H1 (cell line): ENCODE measurements at regions of chr9 and their contacts with region 1.

Region 1: GRCh38 chr9:109469646-109470358 is 28.3 kb downstream of the PTPN3 start:
- DNase-seq: peak; percentile 44 to 76
- H3K4me3 ChIP-seq: no peak overlapping the region
- H3K27ac ChIP-seq: no peak overlapping the region
- H3K4me1 ChIP-seq: no peaks in the 10 kb centered on the region
- H3K27me3 ChIP-seq: no peaks in the 10 kb centered on the region
- CTCF ChIP-seq: peak; percentile 84 to 95 (median 93)
- EP300 ChIP-seq: no peak
- POLR2A ChIP-seq: no peak
- RAD21 ChIP-seq: peak; percentile 89 to 90

Region 2: DNA sequence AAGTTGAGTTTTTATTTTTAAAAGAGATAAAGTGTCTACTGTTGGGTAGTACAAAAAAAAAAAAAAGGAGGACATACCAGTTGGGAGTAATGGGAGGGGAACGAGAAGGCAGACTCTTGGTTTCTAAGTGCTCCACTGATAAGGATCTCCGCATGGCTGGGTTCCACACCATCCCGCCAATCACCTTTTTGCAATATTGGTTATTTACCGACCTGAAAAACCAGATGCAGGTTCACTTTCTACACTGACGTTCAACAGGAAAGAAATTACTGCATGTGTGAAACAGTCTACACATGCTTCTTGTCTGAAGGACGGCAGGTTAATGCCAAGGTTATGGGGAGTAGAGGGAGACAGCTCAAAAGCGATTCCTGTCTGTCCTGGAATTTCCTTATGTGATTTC is 47.2 kb before region 1 on chr9:
- CTCF ChIA-PET with region 1: interaction called, 19 read pairs
- POLR2A ChIA-PET with region 1: no interaction called
- DNase-seq: no peak
- H3K4me3 ChIP-seq: no peak overlapping the region
- H3K27ac ChIP-seq: no peak overlapping the region
- H3K4me1 ChIP-seq: peaks cover 0 to 5% (median 0%) of the 10 kb centered on the region in 4 experiments; a peak in 1 of 7 replicates
- H3K27me3 ChIP-seq: no peaks in the 10 kb centered on the region
- CTCF ChIP-seq: no peak
- EP300 ChIP-seq: no peak
- POLR2A ChIP-seq: no peak
- RAD21 ChIP-seq: no peak

Region 3: GRCh38 chr9:109440797-109441287 is 29.0 kb before region 1 on chr9:
- CTCF ChIA-PET with region 1: interaction called, 66 read pairs
- POLR2A ChIA-PET with region 1: no interaction called
- DNase-seq: peak in 1 of 2 experiments; percentile 63
- H3K4me3 ChIP-seq: no peak overlapping the region
- H3K27ac ChIP-seq: no peak overlapping the region
- H3K4me1 ChIP-seq: peaks cover 0 to 6% (median 0%) of the 10 kb centered on the region in 4 experiments; a peak in 1 of 7 replicates
- H3K27me3 ChIP-seq: no peaks in the 10 kb centered on the region
- CTCF ChIP-seq: peak in 2 of 3 experiments; percentile 75 to 88; a peak in 3 of 4 replicates
- EP300 ChIP-seq: no peak
- POLR2A ChIP-seq: peak; percentile 45 to 60; a peak in 2 of 3 replicates
- RAD21 ChIP-seq: peak; percentile 58 to 66

Region 4: DNA sequence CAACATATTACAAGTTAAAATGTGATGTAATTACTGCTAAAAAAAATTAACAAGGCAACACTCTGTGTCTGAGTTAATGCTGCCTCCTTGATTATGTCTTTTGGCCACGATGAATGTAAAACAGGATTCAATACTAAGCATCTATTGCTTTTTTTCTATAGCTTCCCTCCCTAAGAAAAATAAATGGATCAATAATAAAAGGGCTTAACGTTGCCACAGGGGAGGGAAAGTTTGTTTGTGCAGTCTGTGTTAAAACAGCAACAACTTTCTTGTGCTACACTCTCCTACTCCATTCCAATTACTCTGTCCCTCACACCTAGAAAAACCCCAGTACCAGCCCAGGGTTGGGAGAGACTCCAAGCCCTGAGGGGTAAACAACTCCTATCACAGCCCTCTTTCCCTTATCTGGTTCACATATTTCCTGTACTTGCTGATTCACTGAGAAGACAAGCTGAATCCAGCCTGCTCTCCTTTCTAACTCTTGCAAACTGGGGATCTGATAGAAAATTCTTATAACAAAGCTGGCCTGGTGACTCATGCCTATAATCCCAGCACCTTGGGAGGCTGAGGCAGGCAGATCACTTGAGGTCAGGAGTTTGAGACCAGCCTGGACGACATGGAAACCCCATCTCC is 16.5 kb before region 1 on chr9:
- CTCF ChIA-PET with region 1: interaction called, 236 read pairs
- POLR2A ChIA-PET with region 1: interaction called, 3 read pairs
- DNase-seq: no peak
- H3K4me3 ChIP-seq: no peak overlapping the region
- H3K27ac ChIP-seq: no peak overlapping the region
- H3K4me1 ChIP-seq: peaks cover 0 to 6% (median 3%) of the 10 kb centered on the region in 4 experiments; a peak in 4 of 7 replicates
- H3K27me3 ChIP-seq: no peaks in the 10 kb centered on the region
- CTCF ChIP-seq: no peak
- EP300 ChIP-seq: no peak
- POLR2A ChIP-seq: no peak
- RAD21 ChIP-seq: no peak

Region 5: GRCh38 chr9:109487247-109487646 is 17.4 kb after region 1 on chr9:
- CTCF ChIA-PET with region 1: interaction called, 21 read pairs
- POLR2A ChIA-PET with region 1: interaction called, 3 read pairs
- DNase-seq: no peak
- H3K4me3 ChIP-seq: no peak overlapping the region
- H3K27ac ChIP-seq: no peak overlapping the region
- H3K4me1 ChIP-seq: peaks cover 0 to 2% (median 0%) of the 10 kb centered on the region in 4 experiments; a peak in 1 of 7 replicates
- H3K27me3 ChIP-seq: no peaks in the 10 kb centered on the region
- CTCF ChIP-seq: no peak
- EP300 ChIP-seq: no peak
- POLR2A ChIP-seq: no peak
- RAD21 ChIP-seq: no peak

Region 6: DNA sequence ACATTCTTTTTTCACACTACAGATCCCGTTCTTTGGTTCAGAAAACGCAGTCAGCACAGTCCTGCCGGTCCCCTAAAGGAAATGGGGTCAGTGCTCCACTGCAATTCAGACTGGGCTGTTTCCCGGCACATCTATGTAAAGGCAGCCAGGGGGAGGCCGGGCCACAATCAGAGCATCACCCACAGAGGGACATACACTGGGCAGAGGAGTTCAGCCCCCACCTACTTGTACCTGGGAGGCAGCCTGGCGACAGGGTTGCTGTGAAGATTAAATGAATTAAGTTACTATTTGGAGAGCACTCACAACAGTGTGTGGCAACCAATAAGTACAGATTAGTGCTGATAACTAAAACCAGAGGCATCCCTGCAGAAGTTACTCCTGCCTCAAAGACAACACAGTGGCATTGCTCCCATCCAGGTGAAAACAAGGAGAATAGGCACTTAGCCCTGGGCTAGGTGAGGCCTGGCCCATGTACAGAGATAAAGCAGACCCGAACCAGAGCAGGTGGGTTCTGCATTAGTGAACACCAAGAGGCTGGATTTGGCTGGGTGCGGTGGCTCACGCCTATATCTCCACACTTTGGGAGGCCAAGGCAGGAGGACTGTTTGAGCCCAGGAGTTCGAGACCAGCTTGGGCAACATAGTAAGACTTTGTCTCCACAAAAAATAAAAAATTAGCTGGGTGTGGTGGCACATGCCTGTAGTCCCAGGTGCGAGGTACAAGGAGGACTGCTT is 24.0 kb after region 1 on chr9:
- CTCF ChIA-PET with region 1: interaction called, 19 read pairs
- POLR2A ChIA-PET with region 1: interaction called, 3 read pairs
- DNase-seq: no peak
- H3K4me3 ChIP-seq: no peak overlapping the region
- H3K27ac ChIP-seq: no peak overlapping the region
- H3K4me1 ChIP-seq: peaks cover 0 to 4% (median 0%) of the 10 kb centered on the region in 4 experiments; a peak in 2 of 7 replicates
- H3K27me3 ChIP-seq: peaks cover 14 to 27% (median 21%) of the 10 kb centered on the region in 4 experiments
- CTCF ChIP-seq: no peak
- EP300 ChIP-seq: no peak
- POLR2A ChIP-seq: no peak
- RAD21 ChIP-seq: no peak

Region 7: GRCh38 chr9:109499631-109500410 is 30.0 kb after region 1 on chr9:
- CTCF ChIA-PET with region 1: interaction called, 12 read pairs
- POLR2A ChIA-PET with region 1: interaction called, 3 read pairs
- DNase-seq: peak in 1 of 2 experiments; percentile 80
- H3K4me3 ChIP-seq: peak overlapping the region; percentile 19 to 61 (median 46)
- H3K27ac ChIP-seq: no peak overlapping the region
- H3K4me1 ChIP-seq: peaks cover 2 to 5% (median 4%) of the 10 kb centered on the region in 4 experiments; a peak in 6 of 7 replicates
- H3K27me3 ChIP-seq: peaks cover 25 to 47% (median 36%) of the 10 kb centered on the region in 4 experiments
- CTCF ChIP-seq: 0 out of 4 replicates have a peak, but pooled peaks of 1 of the 3 experiments have one; percentile 1
- EP300 ChIP-seq: no peak
- POLR2A ChIP-seq: no peak
- RAD21 ChIP-seq: no peak